Adrenal gland (tissue), 19 donors: ENCODE measurements at regions of chr19 and their contacts with region 1.

Region 1: GRCh38 chr19:15629003-15629880 is 11.5 kb upstream of the CYP4F3 start:
- DNase-seq: peak; percentile 62 to 86 (median 78)
- H3K4me3 ChIP-seq: no peak overlapping the region
- H3K27ac ChIP-seq: no peak overlapping the region
- H3K4me1 ChIP-seq: no peaks in the 10 kb centered on the region
- H3K27me3 ChIP-seq: peaks cover 9% of the 10 kb centered on the region
- CTCF ChIP-seq: peak; percentile 93 to 98 (median 97)
- POLR2A ChIP-seq: no peak

Region 2: DNA sequence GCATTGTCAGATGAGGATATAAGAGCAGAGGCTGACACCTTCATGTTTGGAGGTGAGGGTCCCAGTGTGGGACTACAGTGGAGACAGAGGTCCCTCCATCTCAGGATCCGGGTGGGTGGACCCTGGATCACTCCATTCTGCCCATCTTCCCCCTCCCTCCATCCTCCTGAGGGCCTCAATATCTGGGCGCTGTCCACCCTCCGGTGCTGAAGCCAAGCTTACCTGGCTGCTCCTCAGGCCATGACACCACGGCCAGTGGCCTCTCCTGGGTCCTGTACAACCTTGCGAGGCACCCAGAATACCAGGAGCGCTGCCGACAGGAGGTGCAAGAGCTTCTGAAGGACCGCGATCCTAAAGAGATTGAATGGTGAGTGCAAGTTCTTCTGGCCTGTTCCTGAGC is 55.6 kb after region 1 on chr19:
- intact Hi-C with region 1: no loop called
- DNase-seq: no peak
- H3K4me3 ChIP-seq: no peak overlapping the region
- H3K27ac ChIP-seq: no peak overlapping the region
- H3K4me1 ChIP-seq: no peaks in the 10 kb centered on the region
- H3K27me3 ChIP-seq: no peaks in the 10 kb centered on the region
- CTCF ChIP-seq: no peak
- POLR2A ChIP-seq: no peak

Region 3: GRCh38 chr19:15717809-15718208 is 88.6 kb after region 1 on chr19:
- intact Hi-C with region 1: no loop called
- DNase-seq: no peak
- H3K4me3 ChIP-seq: no peak overlapping the region
- H3K27ac ChIP-seq: no peak overlapping the region
- H3K4me1 ChIP-seq: no peaks in the 10 kb centered on the region
- H3K27me3 ChIP-seq: peaks cover 5% of the 10 kb centered on the region
- CTCF ChIP-seq: no peak
- POLR2A ChIP-seq: no peak

Region 4: DNA sequence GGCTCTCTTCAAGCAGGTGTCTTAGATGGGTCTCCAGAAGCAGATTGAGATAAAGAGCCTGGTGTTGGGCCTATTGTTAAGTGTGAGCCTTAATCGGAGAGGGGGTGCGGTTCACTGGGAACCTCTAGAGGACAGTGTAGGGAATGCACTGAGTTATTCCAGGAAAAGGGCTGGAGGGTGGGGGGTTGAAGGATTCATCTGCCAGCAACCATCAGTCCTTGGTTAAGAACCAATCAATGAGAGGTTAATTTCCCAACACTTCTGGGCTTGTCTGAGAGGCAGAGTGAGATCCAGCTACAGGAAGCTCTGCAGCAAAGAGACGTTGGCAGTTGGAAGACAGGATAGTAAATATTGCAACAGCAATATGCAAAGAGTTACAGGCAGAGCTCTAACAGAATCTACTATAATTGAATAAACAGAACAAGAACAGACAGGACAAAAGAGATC is 239.9 kb after region 1 on chr19:
- intact Hi-C with region 1: loop called in 1 of 2 experiments (anchors 5 kb)
- DNase-seq: peak in 5 of 7 donors; percentile 27 to 57 (median 48)
- H3K4me3 ChIP-seq: no peak overlapping the region
- H3K27ac ChIP-seq: no peak overlapping the region
- H3K4me1 ChIP-seq: no peaks in the 10 kb centered on the region
- H3K27me3 ChIP-seq: peaks cover 12% of the 10 kb centered on the region
- CTCF ChIP-seq: peak; percentile 44 to 73 (median 60)
- POLR2A ChIP-seq: no peak